ENCODE measurements at regions of chr4 and their contacts with region 1.

Region 1: DNA sequence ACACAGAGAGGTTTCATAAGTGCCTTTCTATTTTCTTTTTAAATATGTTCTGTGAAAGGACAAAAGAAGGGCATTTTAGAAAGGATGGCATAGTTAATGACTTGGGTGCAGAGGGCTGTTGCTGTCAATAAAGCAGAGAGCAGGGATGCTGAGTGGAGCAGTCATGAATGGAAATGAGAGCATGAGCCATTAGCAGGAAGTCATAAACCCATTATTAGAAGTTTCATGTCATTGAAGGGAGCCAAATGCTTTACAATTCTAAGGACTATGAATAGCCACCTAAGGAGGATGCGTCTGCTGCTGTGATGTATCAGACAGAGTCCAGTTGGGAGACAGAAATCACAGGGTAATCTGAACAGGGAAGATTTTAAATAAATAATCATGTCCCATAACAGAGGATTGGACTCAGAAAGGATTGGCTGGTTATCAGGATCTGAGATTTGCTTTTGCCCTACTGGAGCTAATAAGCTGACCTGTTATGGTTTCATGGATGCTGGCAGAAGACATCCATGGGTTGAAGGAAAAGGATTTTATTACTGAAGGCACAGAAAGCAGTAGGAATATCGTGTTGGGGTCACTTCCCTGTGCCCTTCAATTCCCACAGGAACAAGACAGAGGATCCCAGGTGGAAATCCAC is 47.5 kb upstream of the WDR19 start:
- DNase-seq: peak; percentile 10
- H3K4me3 ChIP-seq: peak overlapping the region in 1 of 2 experiments; percentile 3; a peak in 1 of 4 replicates
- H3K27ac ChIP-seq: peak overlapping the region; percentile 21 to 29; a peak in 3 of 4 replicates
- H3K4me1 ChIP-seq: peaks cover 0 to 7% of the 10 kb centered on the region in 2 experiments; a peak in 1 of 4 replicates
- H3K27me3 ChIP-seq: no peaks in the 10 kb centered on the region
- CTCF ChIP-seq: no peak
- EP300 ChIP-seq: no peak
- RAD21 ChIP-seq: no peak

Region 2: DNA sequence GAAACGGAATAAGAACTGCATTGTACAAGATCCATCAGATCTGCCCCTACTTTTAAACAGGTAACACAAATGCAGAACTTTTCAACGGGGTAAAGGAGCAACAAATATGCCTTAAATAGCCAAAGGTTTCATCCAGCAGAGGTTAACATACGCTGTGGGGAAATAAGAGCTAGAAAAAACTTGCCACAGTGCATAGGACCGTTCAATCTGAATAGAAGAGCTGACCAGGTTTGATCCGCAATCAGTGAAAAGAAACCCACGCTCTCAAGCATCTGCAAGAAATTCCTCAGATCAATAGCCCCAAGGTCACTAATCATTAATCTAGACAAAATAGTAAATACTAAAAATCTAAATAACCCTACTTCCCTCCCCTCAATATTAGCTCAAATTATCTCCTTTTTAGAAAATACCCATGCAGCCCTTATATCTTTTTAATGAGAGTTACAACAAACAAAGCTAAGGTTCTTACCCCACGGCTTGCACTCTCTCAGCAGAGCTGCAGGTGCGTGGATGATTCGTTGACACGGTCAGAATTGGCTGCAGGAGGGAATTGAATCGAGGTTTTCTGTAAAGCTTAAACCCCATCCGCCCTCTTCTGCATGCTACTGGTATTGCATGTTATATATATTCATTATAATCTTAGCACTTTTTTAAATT is 352.2 kb before region 1 on chr4 and contains the start of gene TLR10:
- CTCF ChIA-PET with region 1: interaction called, 10 read pairs
- POLR2A ChIA-PET with region 1: no interaction called
- DNase-seq: peak; percentile 53
- H3K4me3 ChIP-seq: peak within 1 kb of the TSS in 1 of 2 experiments; percentile 26; a peak in 1 of 4 replicates
- H3K27ac ChIP-seq: no peak within 1 kb of the TSS
- H3K4me1 ChIP-seq: no peaks in the 10 kb centered on the region
- H3K27me3 ChIP-seq: peaks cover 5% of the 10 kb centered on the region; the same call in 1 of the 2 replicates
- CTCF ChIP-seq: peak; percentile 67
- EP300 ChIP-seq: no peak
- RAD21 ChIP-seq: peak; percentile 72
- polyA plus RNA-seq, gene TLR10: not detected in 2 replicates

Region 3: DNA sequence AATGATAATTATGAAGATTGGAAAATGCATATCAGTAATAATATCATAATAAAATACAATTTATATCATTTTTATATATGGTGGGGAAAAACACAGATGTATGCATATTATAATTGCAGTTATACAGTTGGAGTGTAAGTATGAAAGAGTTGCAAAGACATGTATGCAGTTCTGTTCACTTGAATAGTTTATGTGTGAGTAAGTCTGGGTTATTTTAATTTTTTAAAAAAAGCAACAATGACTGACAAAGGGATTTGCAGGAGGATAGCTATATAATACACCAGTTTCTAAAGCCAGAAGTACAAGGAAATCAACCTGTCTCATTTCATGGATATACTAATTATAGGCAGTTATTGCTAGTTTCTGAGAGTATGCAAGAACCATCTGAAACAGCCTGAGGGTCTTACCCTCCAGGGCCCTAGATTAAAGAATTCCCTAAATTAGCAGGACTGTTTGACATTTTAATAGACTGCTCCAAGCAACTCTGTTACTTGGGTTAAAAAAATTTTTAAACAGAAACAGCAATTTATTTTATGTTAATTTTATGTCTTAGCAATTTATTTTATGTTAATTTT is 227.0 kb before region 1 on chr4:
- CTCF ChIA-PET with region 1: interaction called, 178 read pairs
- POLR2A ChIA-PET with region 1: no interaction called
- DNase-seq: no peak
- H3K4me3 ChIP-seq: no peak overlapping the region
- H3K27ac ChIP-seq: no peak overlapping the region
- H3K4me1 ChIP-seq: peaks cover 0 to 9% of the 10 kb centered on the region in 2 experiments; a peak in 2 of 4 replicates
- H3K27me3 ChIP-seq: no peaks in the 10 kb centered on the region
- CTCF ChIP-seq: no peak
- EP300 ChIP-seq: no peak
- RAD21 ChIP-seq: no peak

Region 4: DNA sequence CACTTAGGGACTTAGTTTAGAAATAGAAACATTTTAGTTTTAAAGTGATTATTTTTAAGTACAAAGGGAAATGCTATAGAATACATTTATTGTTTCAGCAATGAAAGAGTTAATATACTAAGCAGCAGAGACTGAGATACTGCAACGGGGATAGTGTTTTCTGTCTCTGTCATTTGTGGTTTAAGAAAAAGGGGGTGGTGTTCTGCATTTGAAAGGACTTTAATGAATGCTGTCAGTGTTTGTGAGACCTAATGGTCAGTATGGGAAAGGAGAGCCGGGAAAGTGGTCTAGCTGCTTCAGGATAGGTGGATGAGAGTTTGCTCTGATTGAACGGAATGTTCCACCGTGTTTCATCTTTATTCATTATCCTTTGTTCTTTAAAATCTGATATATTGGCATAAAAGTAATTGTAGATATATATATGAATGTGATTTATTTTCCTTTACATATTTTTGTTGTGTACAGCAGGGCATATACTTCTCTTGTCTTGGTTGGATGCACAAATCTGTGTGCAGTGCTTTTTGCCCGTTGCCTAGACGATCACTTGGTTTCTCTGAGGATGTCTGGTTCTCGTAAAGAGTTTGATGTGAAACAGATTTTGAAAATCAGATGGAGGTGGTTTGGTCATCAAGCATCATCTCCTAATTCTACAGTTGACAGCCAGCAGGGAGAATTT is 72.6 kb before region 1 on chr4 and contains the start of gene KLHL5:
- CTCF ChIA-PET with region 1: interaction called, 24 read pairs
- POLR2A ChIA-PET with region 1: no interaction called
- DNase-seq: peak; percentile 52
- H3K4me3 ChIP-seq: peak within 1 kb of the TSS; percentile 33 to 42
- H3K27ac ChIP-seq: peak within 1 kb of the TSS; percentile 64 to 80
- H3K4me1 ChIP-seq: peaks cover 0 to 14% of the 10 kb centered on the region in 2 experiments; a peak in 2 of 4 replicates
- H3K27me3 ChIP-seq: no peaks in the 10 kb centered on the region
- CTCF ChIP-seq: no peak
- EP300 ChIP-seq: peak in 1 of 2 experiments; percentile 28; a peak in 1 of 4 replicates
- RAD21 ChIP-seq: no peak
- polyA plus RNA-seq, gene KLHL5: 33.1 and 37.0 TPM in 2 replicates

Region 5: DNA sequence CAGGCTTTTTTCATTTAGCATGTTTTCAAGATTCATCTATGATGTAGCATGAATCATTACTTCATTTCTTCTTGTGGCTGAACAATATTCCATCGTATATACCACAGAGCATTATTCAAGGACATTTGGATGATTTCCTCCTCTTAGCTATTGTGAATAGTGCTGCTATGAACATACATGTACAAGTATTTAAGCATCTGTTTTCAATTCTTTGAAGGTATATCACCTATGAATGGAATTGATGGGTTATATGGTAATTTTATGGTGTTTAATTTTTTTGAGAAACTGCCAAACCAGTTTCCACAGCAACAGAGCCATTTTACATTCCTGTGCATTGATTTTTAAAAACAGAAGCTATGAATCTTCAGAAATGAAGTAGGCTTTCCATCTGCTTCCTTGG is 11.4 kb after region 1 on chr4:
- CTCF ChIA-PET with region 1: interaction called, 41 read pairs
- POLR2A ChIA-PET with region 1: no interaction called
- DNase-seq: no peak
- H3K4me3 ChIP-seq: no peak overlapping the region
- H3K27ac ChIP-seq: no peak overlapping the region
- H3K4me1 ChIP-seq: peaks cover 0 to 4% of the 10 kb centered on the region in 2 experiments; a peak in 1 of 4 replicates
- H3K27me3 ChIP-seq: no peaks in the 10 kb centered on the region
- CTCF ChIP-seq: no peak
- EP300 ChIP-seq: no peak
- RAD21 ChIP-seq: no peak

Region 6: DNA sequence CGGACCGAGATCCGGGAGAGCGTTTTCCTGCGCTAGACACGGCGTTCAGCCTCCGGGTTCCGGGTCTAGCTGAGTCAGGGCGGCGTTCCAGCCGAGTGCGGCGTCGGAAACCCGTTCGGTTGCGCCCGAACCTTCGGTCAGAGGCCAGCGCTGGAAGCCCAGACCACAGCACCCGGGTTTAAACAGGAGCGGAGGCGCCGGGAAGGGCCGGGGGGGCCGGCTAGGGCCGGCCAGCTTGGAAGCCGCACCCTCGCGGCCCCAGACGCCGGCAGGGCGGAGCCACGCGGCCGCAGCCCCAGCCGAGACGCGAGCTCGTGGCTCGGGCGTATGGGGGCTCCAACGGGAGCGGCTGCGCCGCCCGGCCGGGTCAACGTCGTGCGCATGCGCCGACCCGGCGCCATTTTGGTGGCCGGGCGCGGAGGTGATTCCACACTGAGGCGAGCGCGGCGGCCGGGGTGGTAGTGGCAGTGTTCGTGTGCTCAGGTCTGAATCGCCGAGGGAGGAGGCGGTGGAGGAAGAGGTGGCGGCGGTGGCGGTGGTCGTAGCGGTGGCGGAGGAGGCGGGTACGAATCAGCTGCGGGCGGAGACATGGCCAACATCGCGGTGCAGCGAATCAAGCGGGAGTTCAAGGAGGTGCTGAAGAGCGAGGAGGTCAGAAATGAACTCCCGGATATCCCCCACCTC is 563.1 kb after region 1 on chr4 and contains the start of gene UBE2K:
- CTCF ChIA-PET with region 1: no interaction called
- POLR2A ChIA-PET with region 1: no interaction called
- DNase-seq: peak; percentile 97
- H3K4me3 ChIP-seq: peak within 1 kb of the TSS; percentile 81 to 97
- H3K27ac ChIP-seq: peak within 1 kb of the TSS; percentile 90 to 95
- H3K4me1 ChIP-seq: peaks cover 0 to 5% of the 10 kb centered on the region in 2 experiments; a peak in 2 of 4 replicates
- H3K27me3 ChIP-seq: no peaks in the 10 kb centered on the region
- CTCF ChIP-seq: no peak
- EP300 ChIP-seq: no peak
- RAD21 ChIP-seq: no peak
- polyA plus RNA-seq, gene UBE2K: 54.4 and 102 TPM in 2 replicates

Measured in SK-N-SH (cell line).